Lower leg skin (tissue), 4 donors: ENCODE measurements at regions of chr6 and their contacts with region 1.

Region 1: DNA sequence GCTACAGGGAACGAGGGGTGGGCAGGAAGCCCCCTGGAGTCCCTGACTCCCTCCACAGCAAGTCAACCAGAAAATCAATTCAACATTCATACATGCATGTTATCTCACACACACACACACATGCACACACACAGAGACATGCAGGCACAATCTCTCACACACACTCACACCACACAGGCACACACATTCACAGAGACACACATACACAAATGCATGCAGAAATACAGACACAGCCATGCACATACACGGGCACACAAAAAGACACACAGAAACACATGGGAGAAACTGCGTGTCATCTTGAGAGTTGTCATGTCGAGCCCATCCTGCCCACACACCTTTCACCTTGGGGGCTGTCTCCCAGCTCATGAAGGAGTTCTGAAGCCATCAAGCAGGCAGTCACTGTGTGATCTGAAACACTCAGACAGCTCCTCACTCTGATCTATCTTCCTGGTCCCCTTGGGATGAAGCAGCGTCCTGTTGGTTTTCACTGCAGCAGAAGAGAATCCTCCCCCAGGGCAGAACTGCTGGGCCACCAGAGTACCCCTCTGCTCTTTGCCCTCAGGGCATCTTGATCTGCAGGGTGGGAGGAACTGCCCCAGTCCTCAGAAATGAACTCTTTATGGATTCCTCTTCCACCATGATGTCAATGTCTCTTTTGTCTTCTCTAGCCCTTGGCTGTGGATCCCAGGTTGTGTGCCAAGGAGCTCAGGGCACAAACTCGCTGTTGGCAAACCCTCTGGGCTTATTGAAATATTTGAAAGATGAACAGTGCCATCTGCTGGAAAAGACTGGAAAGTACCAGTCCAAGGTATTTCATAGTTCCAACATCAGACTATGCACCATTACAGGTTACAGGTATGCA is 8.8 kb downstream of the RAET1L start:
- DNase-seq: peak in 1 of 2 donors; percentile 83
- H3K4me3 ChIP-seq: no peak overlapping the region
- CTCF ChIP-seq: peak in 1 of 3 donors; percentile 34
- POLR2A ChIP-seq: no peak

Region 2: GRCh38 chr6:149834513-149835481 is 181.8 kb before region 1 on chr6:
- intact Hi-C with region 1: loop called (anchors 10 kb)
- DNase-seq: peak in 1 of 2 donors; percentile 64
- H3K4me3 ChIP-seq: no peak overlapping the region
- CTCF ChIP-seq: peak in 1 of 3 donors; percentile 76
- POLR2A ChIP-seq: no peak

Region 3: GRCh38 chr6:149934249-149935156 is 82.1 kb before region 1 on chr6:
- intact Hi-C with region 1: loop called (anchors 5 kb)
- DNase-seq: peak; percentile 70 to 90
- H3K4me3 ChIP-seq: no peak overlapping the region
- CTCF ChIP-seq: peak in 2 of 3 donors; percentile 4 to 48
- POLR2A ChIP-seq: no peak

Region 4: DNA sequence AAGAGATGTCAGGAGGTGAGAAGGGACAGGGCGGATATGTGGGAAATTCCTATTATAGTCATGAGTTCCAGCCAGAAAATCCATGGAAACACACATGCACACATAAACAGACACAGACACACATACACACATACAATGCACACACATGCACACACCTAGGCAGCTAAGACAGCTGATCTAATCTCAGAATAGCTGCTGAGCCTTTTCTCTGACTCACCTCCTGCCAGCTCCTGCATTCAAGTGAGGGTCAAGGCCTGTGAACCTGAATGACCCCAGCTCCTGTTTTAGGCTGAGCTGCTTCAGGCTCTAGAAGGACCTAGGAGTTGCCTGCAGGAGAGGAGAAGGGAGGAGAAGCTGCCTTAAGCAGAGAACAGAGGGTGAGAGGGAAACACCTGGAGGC is 30.4 kb after region 1 on chr6:
- intact Hi-C with region 1: no loop called
- DNase-seq: no peak
- H3K4me3 ChIP-seq: no peak overlapping the region
- CTCF ChIP-seq: no peak
- POLR2A ChIP-seq: no peak